Gastrocnemius medialis (tissue), 4 donors: ENCODE measurements at regions of chr7 and their contacts with region 1.

Region 1: GRCh38 chr7:67033251-67033650 is 36.6 kb downstream of the TYW1 start:
- DNase-seq: no peak
- ATAC-seq: no peak
- H3K4me3 ChIP-seq: no peak overlapping the region
- H3K27ac ChIP-seq: no peak overlapping the region
- H3K4me1 ChIP-seq: peaks cover 12% of the 10 kb centered on the region in 2 donors
- H3K27me3 ChIP-seq: no peaks in the 10 kb centered on the region
- CTCF ChIP-seq: no peak
- POLR2A ChIP-seq: no peak

Region 2: DNA sequence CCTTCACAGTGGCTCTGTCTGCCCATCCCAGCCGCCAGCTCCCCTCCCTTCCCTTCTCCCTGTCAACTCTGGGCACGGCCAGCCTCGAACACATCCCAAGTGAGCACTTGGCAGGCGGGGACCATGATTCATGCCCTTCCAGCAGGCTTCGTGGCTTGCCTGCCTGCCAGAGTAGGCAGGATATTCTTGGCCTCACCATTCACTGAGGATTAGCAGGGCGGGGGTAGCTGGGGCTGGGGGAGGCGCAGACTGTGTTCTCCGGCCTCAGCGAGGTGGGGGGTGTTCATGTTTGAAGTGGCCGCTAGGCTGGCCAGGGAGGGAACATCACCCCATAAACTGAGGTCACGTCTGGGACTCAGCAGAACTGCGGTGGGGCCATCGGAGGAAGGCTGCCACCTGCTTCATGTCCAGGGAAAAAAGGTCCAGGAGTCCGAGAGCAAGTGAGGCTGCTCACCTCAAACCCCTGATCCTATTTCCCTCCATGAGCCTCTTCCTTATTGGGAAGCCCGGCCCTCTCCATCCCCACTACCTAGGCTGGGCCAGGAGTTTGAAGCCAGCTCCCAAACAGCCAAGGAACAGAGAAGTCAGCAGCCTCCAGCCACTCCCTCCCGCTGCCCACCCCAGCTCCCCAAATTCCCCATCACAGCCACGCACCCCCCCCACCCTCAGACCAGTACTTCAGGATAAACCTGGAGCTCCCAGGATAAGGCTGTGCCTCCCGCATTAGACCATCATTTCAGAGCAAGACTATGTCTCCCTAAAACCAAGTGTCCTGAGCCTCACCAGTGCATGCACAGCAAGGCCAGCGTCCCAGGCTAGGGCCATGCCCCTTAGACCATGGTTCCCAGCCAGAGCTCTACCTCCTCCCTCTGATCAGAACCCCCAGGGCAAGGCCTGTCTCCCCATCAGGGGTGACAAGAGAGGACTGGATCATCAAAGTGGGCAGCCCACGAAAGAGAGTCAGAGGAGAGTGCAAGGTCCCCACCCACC is 335.5 kb before region 1 on chr7:
- in situ Hi-C with region 1: no loop called
- intact Hi-C with region 1: no loop called
- DNase-seq: peak in 1 of 2 donors; percentile 23
- ATAC-seq: peak in 1 of 2 donors; percentile 45
- H3K4me3 ChIP-seq: no peak overlapping the region
- H3K27ac ChIP-seq: no peak overlapping the region
- H3K4me1 ChIP-seq: peaks cover 0 to 9% of the 10 kb centered on the region in 2 donors
- H3K27me3 ChIP-seq: no peaks in the 10 kb centered on the region
- CTCF ChIP-seq: no peak
- POLR2A ChIP-seq: no peak

Region 3: GRCh38 chr7:66824041-66824625 is 209.1 kb before region 1 on chr7:
- in situ Hi-C with region 1: no loop called
- intact Hi-C with region 1: no loop called
- DNase-seq: no peak
- ATAC-seq: no peak
- H3K4me3 ChIP-seq: no peak overlapping the region
- H3K27ac ChIP-seq: no peak overlapping the region
- H3K4me1 ChIP-seq: no peaks in the 10 kb centered on the region
- H3K27me3 ChIP-seq: no peaks in the 10 kb centered on the region
- CTCF ChIP-seq: no peak
- POLR2A ChIP-seq: no peak

Region 4: GRCh38 chr7:67302113-67303039 is 269.1 kb after region 1 on chr7:
- in situ Hi-C with region 1: loop called in 1 of 4 experiments (anchors 25 kb)
- intact Hi-C with region 1: no loop called
- DNase-seq: peak; percentile 99
- ATAC-seq: peak; percentile 95 to 96
- H3K4me3 ChIP-seq: peak overlapping the region; percentile 70 to 95 (median 82)
- H3K27ac ChIP-seq: peak overlapping the region; percentile 90 to 98 (median 95)
- H3K4me1 ChIP-seq: peaks cover 20 to 36% of the 10 kb centered on the region in 2 donors
- H3K27me3 ChIP-seq: no peaks in the 10 kb centered on the region
- CTCF ChIP-seq: peak; percentile 58 to 72 (median 62)
- POLR2A ChIP-seq: peak; percentile 80 to 85

Region 5: GRCh38 chr7:67608806-67609205 is 575.6 kb after region 1 on chr7:
- in situ Hi-C with region 1: no loop called
- intact Hi-C with region 1: no loop called
- DNase-seq: no peak
- ATAC-seq: no peak
- H3K4me3 ChIP-seq: no peak overlapping the region
- H3K27ac ChIP-seq: no peak overlapping the region
- H3K4me1 ChIP-seq: no peaks in the 10 kb centered on the region
- H3K27me3 ChIP-seq: no peaks in the 10 kb centered on the region
- CTCF ChIP-seq: no peak
- POLR2A ChIP-seq: no peak